A549 (cell line): ENCODE measurements at regions of chr11 and their contacts with region 1.

Region 1: DNA sequence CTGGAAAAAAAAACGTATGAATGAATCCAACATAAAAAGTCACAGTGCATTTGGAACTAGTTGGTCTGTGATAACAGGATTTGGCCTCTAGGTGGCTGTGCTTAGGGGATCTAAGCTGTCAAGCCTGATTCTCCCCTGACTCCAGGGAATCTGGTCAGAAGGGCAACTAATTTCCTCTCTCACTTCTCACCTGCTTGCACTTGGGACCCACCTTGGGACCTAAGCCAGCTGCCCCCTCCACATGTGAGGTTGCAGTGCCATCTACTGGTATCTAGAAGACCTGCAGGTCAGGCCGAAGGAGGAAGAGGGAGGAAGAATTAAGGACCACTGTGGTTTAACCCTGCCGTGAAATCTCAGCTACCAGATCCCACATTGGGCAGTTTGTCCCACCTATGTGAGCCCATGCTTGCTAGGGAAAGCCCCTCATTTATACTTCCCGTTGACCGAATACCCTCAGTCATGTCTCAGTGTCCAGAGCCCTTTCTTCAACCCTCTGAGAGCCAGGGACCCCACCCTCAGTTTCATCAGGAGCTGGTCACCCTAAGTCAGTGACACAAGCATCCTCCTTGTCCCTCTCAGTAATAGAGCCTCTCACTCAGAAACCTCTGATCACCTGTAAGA is 33.2 kb upstream of the CAVIN3 start:
- DNase-seq: peak; percentile 46 to 79
- ATAC-seq: peak; percentile 56 to 86; a peak in 5 of 6 replicates
- H3K4me3 ChIP-seq: no peak overlapping the region
- H3K27ac ChIP-seq: 0 out of 6 replicates have a peak overlapping the region, but pooled peaks of 1 of the 2 experiments have one; percentile 28
- H3K4me1 ChIP-seq: peaks cover 22% of the 10 kb centered on the region
- CTCF ChIP-seq: peak; percentile 96
- EP300 ChIP-seq: no peak
- POLR2A ChIP-seq: no peak
- RAD21 ChIP-seq: peak; percentile 92 to 95

Region 2: DNA sequence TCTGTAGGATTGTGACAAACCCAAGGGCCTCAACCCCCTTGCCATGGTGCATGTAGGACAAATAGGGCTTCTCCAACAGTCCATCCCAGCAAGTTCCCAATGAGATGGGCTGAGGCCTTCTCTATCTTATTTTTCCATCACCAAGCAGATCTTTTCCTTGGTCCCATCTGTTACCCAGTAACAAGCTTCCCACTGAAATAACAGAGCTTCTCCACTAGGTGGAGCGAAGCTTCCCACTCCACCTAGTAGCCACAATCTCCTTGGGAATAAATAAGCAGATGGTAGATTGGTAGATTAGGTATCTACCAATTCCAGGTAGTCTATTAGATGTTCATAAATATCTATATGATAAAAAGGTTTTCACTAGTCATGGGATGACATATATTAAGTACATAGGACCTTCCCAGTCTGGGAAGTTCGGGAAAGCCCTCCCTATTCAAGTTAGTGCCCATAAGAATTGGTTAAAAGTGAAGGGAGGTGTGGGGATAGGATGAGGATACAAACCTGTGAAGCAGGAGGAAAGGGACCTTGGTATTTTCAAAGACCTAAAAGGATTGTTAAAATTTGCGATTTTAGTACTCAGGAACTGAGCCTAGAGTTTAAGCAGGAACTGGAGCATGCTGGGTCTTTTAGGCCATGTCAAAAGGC is 360.7 kb before region 1 on chr11:
- CTCF ChIA-PET with region 1: interaction called, 15 read pairs
- POLR2A ChIA-PET with region 1: no interaction called
- DNase-seq: peak; percentile 37 to 43
- ATAC-seq: peak in 1 of 2 experiments; percentile 83; a peak in 4 of 6 replicates
- H3K4me3 ChIP-seq: no peak overlapping the region
- H3K27ac ChIP-seq: no peak overlapping the region
- H3K4me1 ChIP-seq: no peaks in the 10 kb centered on the region
- CTCF ChIP-seq: peak; percentile 37; the same call in 2 of the 3 replicates
- EP300 ChIP-seq: no peak
- POLR2A ChIP-seq: no peak
- RAD21 ChIP-seq: peak in 1 of 2 experiments; percentile 19; a peak in 1 of 5 replicates

Region 3: GRCh38 chr11:6251120-6251733 is 102.2 kb before region 1 on chr11:
- CTCF ChIA-PET with region 1: interaction called, 83 read pairs
- POLR2A ChIA-PET with region 1: no interaction called
- DNase-seq: peak; percentile 74 to 82
- ATAC-seq: peak; percentile 95 to 98
- H3K4me3 ChIP-seq: no peak overlapping the region
- H3K27ac ChIP-seq: no peak overlapping the region
- H3K4me1 ChIP-seq: peaks cover 9% of the 10 kb centered on the region; the same call in 2 of the 3 replicates
- CTCF ChIP-seq: peak; percentile 60
- EP300 ChIP-seq: no peak
- POLR2A ChIP-seq: no peak
- RAD21 ChIP-seq: peak; percentile 41 to 62; a peak in 2 of 5 replicates

Region 4: GRCh38 chr11:6307876-6308275 is 45.6 kb before region 1 on chr11:
- CTCF ChIA-PET with region 1: interaction called, 13 read pairs
- POLR2A ChIA-PET with region 1: no interaction called
- DNase-seq: no peak
- ATAC-seq: peak; percentile 43 to 53; a peak in 4 of 6 replicates
- H3K4me3 ChIP-seq: no peak overlapping the region
- H3K27ac ChIP-seq: no peak overlapping the region
- H3K4me1 ChIP-seq: no peaks in the 10 kb centered on the region
- CTCF ChIP-seq: no peak
- EP300 ChIP-seq: no peak
- POLR2A ChIP-seq: no peak
- RAD21 ChIP-seq: no peak

Region 5: DNA sequence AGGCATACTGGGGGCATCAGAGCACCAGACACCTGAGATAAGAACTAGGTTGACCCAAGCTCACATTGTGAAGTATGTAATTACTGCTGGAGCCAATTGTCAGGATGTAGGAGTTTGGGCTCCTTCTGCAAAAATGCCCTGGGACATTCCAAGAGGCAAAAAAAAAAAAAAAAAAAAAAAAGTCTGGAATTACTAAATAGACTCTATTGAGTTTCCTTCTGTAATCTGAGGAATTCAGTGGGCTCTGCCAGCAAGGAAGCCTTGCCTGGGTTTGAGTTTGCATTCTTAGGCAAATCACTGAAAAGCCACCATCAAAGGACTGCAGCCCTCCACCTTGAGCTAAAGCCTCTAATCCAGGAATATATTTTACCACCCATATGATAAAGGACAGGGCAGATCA is 25.2 kb before region 1 on chr11:
- CTCF ChIA-PET with region 1: interaction called, 10 read pairs
- POLR2A ChIA-PET with region 1: no interaction called
- DNase-seq: no peak
- ATAC-seq: no peak
- H3K4me3 ChIP-seq: no peak overlapping the region
- H3K27ac ChIP-seq: no peak overlapping the region
- H3K4me1 ChIP-seq: no peaks in the 10 kb centered on the region
- CTCF ChIP-seq: no peak
- EP300 ChIP-seq: no peak
- POLR2A ChIP-seq: no peak
- RAD21 ChIP-seq: no peak

Region 6: GRCh38 chr11:6516865-6517264 is 163.4 kb after region 1 on chr11:
- CTCF ChIA-PET with region 1: no interaction called
- POLR2A ChIA-PET with region 1: no interaction called
- DNase-seq: no peak
- ATAC-seq: no peak
- H3K4me3 ChIP-seq: no peak overlapping the region
- H3K27ac ChIP-seq: no peak overlapping the region
- H3K4me1 ChIP-seq: no peaks in the 10 kb centered on the region
- CTCF ChIP-seq: no peak
- EP300 ChIP-seq: no peak
- POLR2A ChIP-seq: no peak
- RAD21 ChIP-seq: no peak